Activated naive CD4-positive, alpha-beta T cell treated with anti-CD3 and anti-CD28 coated beads for 36 hours (primary cell): ENCODE measurements at regions of chr12 and their contacts with region 1.

Region 1: DNA sequence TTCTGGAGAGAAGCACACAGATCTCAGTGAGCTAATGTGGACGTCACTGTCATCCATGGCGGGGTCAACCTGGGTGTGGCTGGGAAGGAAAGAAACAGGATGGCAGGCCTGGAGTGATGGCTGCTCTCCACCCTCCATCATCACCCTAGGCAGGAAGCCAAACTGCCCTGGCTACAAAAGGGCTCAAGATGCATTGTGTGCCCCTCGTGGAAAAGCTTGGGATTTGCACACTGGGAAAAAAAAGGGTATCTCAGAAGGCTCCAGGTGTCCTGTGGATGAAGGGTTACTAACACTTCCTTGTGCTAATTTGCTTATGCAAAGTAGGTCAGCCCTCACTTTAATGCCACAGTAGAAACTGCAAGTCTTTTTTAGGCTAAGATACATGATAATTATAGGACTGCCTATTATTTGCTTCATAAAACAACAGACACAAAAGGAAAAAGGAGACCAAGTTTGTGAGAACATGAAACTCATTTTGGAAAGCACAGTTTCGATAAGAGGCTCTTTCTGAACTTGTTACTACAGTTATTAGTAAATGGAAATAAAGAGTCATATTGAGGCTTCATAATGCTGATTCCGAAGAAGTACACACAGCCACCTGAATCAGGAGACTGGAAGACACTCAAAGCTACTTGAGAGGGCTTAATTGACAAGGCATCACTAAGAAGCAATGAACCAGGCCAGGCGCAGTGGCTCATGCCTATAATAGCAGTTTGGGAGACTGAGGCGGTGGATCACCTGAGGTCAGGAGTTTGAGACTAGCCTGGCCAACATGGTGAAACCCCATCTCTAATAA is 18.9 kb downstream of the RFC5 start:
- DNase-seq: peak; percentile 55
- H3K4me3 Mint-ChIP-seq: no peak overlapping the region
- H3K27ac Mint-ChIP-seq: peak overlapping the region; percentile 87
- H3K4me1 Mint-ChIP-seq: peaks cover 57% of the 10 kb centered on the region
- H3K27me3 Mint-ChIP-seq: no peaks in the 10 kb centered on the region

Region 2: GRCh38 chr12:116924558-116925453 is 1110.6 kb before region 1 on chr12:
- CTCF ChIA-PET with region 1: no interaction called
- intact Hi-C with region 1: loop called (anchors 10 kb)
- DNase-seq: peak; percentile 70
- H3K4me3 Mint-ChIP-seq: no peak overlapping the region
- H3K27ac Mint-ChIP-seq: no peak overlapping the region
- H3K4me1 Mint-ChIP-seq: peaks cover 66% of the 10 kb centered on the region
- H3K27me3 Mint-ChIP-seq: peaks cover 3% of the 10 kb centered on the region

Region 3: DNA sequence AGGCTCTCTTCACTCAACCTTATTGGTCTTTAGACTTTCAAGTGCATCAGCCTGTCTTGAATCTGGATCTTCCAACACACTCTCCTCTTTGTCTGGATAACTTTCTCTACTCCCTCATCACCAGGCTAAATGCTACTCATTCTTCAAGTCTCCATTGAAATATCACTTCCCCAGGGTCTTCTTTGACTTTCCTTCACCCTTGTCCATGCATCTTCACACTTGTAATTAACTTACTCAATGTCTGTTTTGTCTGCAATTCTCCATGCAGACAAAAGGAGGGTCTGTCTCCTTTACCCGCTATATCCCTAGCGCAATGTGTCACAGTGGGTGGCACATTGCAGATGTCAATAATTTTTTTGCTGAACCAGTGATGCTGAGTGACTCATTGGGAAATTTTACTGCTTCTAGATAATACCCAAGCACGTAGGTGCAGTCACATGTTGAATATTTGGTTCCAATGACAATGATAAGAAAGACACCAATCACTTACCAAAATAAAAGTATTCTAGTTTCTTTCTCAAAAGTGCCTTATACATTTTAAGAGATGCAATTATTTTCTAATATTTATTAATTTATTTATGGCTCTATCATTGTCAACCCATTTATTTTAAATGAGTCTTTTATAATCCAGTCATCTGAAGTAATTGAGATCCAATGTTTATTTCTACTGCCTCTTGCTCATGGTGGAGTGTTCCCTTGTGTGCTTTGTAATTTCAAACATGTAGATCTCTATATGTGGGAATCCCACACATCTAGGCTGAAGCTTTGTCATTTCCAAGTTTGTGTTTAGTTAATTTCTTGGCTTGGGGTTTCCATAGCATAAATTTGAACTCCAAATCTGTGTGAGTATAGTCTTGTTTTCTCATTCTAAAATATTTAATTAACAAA is 40.6 kb before region 1 on chr12:
- CTCF ChIA-PET with region 1: no interaction called
- intact Hi-C with region 1: no loop called
- DNase-seq: no peak
- H3K4me3 Mint-ChIP-seq: no peak overlapping the region
- H3K27ac Mint-ChIP-seq: no peak overlapping the region
- H3K4me1 Mint-ChIP-seq: no peaks in the 10 kb centered on the region
- H3K27me3 Mint-ChIP-seq: peaks cover 7% of the 10 kb centered on the region

Region 4: DNA sequence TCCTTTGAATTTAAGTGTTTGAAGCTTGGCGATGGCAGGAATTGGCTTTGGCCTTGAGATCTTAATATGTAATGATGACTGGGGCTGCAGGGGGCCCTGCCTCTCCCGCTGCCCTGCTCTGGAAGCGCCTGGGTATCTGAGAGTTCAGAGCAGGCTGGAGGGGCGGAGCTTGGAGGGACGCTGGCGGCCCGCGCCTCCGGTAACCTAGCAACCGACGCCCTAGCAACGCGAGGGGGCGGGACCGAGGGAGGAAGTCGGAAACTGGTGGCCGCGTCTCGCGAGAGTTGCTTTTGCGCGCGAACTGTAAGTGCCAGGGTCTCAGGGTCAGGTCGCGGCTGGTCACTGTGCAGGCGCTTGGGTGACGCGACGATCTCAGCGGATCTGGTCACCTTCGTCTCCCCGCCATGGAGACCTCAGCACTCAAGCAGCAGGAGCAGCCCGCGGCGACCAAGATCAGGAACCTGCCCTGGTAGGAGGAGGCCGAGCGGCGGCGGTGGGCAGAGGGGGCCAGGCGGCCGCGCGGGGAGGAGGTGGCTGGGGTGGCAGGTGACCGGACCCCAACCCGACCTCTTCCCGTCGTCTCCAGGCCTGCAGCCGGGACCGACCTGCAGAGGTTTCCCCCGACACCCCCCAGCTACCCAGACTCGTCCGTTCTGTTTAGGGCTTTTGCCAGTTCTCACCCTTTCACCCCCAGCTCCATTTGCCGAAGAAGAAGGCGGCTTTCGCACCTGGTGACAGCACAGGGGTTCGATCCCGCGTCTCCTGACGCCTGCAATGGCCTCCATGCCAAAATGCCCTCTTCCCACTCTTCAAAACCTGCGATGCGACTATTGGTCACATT is 18.8 kb before region 1 on chr12 and contains the start of gene RFC5:
- CTCF ChIA-PET with region 1: no interaction called
- intact Hi-C with region 1: loop called (anchors 1 kb)
- DNase-seq: peak; percentile 98
- H3K4me3 Mint-ChIP-seq: peak within 1 kb of the TSS; percentile 96
- H3K27ac Mint-ChIP-seq: peak within 1 kb of the TSS; percentile 88
- H3K4me1 Mint-ChIP-seq: peaks cover 19% of the 10 kb centered on the region
- H3K27me3 Mint-ChIP-seq: no peaks in the 10 kb centered on the region
- total RNA-seq, gene RFC5: 62.0 to 62.5 TPM

Region 5: DNA sequence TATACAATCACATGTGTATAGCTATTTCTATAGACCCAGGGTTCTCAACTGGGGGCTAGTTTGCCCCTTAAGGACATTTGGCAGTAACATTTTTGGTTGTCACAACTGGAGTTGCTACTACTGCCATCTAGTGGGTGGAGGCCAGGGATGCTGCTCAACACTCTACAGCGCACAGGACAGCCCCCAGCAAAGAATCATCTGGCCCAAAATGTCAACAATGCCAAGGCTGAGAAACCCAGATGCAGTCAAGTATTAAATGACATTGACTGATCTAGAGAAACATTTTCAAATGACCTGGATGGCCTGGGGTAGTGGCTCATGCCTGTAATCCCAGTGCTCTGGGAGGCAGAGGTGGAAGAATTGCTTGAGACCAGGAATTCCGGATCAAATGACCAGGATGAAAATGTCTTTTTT is 19.7 kb after region 1 on chr12:
- CTCF ChIA-PET with region 1: interaction called, 8 read pairs
- intact Hi-C with region 1: loop called (anchors 1 kb)
- DNase-seq: peak; percentile 85
- H3K4me3 Mint-ChIP-seq: no peak overlapping the region
- H3K27ac Mint-ChIP-seq: no peak overlapping the region
- H3K4me1 Mint-ChIP-seq: peaks cover 42% of the 10 kb centered on the region
- H3K27me3 Mint-ChIP-seq: no peaks in the 10 kb centered on the region

Region 6: GRCh38 chr12:118061011-118061875 is 25.8 kb after region 1 on chr12 and contains the start of gene WSB2:
- CTCF ChIA-PET with region 1: interaction called, 6 read pairs
- intact Hi-C with region 1: loop called (anchors 1 kb)
- DNase-seq: peak; percentile 51
- H3K4me3 Mint-ChIP-seq: peak within 1 kb of the TSS; percentile 90
- H3K27ac Mint-ChIP-seq: peak within 1 kb of the TSS; percentile 91
- H3K4me1 Mint-ChIP-seq: peaks cover 45% of the 10 kb centered on the region
- H3K27me3 Mint-ChIP-seq: peaks cover 5% of the 10 kb centered on the region
- total RNA-seq, gene WSB2: 31.0 to 31.7 TPM

Region 7: DNA sequence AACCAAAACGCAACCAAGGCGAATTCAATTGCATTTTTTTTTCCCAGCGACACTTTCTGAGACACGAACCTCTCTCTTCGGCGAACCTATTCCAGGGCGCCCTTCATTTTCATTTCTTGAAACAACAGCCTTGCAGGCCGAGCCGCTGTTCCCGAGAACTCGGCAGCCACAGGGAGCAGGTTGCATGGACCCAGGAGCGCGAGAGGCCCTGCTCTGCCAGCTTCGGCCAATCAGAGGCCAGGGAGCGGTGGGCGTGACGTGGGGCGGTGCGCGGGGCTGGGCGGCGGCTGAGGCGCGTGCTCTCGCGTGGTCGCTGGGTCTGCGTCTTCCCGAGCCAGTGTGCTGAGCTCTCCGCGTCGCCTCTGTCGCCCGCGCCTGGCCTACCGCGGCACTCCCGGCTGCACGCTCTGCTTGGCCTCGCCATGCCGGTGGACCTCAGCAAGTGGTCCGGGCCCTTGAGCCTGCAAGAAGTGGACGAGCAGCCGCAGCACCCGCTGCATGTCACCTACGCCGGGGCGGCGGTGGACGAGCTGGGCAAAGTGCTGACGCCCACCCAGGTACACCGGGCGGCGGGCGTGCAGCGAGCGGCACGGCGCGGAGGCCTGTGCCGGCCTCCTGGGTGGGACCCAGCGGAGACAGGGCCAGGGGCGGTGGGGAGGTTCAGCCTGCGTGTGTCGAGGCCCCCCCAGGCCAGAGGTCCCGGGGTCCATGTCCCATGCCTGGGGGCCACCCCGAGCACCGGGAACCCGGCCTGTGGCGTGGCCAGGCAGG is 100.5 kb after region 1 on chr12 and contains the start of gene PEBP1:
- CTCF ChIA-PET with region 1: no interaction called
- intact Hi-C with region 1: loop called (anchors 5 kb)
- DNase-seq: peak; percentile 95
- H3K4me3 Mint-ChIP-seq: peak within 1 kb of the TSS; percentile 98
- H3K27ac Mint-ChIP-seq: peak within 1 kb of the TSS; percentile 83
- H3K4me1 Mint-ChIP-seq: peaks cover 31% of the 10 kb centered on the region
- H3K27me3 Mint-ChIP-seq: no peaks in the 10 kb centered on the region
- total RNA-seq, gene PEBP1: 117 to 120 TPM